Spleen (tissue), 13 donors: ENCODE measurements at regions of chr3 and their contacts with region 1.

Region 1: GRCh38 chr3:126394575-126395228 is at the start of gene CFAP100:
- DNase-seq: peak; percentile 70
- H3K4me3 ChIP-seq: peak within 1 kb of the TSS in 1 of 8 donors; percentile 13
- H3K27ac ChIP-seq: no peak within 1 kb of the TSS
- H3K4me1 ChIP-seq: peaks cover 0 to 6% (median 0%) of the 10 kb centered on the region in 6 donors
- H3K27me3 ChIP-seq: peaks cover 0 to 66% (median 13%) of the 10 kb centered on the region in 7 donors
- CTCF ChIP-seq: no peak
- POLR2A ChIP-seq: no peak
- total RNA-seq, gene CFAP100: not detected

Region 2: DNA sequence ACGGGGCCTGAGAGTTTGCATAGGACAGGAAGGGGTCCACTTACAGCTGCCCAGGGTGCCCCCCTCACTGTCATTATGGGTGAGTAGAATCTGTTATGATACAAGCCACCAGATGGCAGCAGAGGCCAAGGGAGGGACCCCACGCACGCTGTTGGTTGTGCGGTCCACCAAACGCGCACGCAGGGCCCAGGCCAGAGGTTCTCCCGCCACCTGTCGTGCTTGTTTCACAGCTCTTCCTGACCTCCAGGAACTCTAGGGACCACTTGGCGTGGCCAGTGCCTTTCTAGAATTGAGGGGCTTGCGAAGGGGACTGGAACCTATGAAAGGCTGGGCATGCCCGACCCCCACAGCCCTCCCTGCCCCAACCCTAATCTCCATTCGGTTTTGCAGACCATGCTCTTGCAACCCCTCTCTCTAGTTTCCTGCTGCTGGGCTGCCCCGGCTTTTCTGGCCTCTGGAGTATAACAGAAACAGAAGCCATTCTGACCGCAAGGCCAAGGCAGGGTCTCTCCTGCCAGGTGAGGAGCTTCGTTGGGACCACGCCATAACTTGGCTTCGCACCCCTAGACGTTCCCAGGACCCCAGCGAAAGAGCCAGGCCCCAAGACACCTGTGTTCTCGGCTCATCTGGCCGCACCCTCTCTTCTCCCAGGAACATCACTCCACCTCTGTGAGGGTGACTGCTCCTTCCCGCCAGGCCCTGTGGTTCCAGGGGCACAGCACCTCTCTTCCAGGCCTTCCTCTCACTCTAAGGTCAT is 260.3 kb before region 1 on chr3:
- intact Hi-C with region 1: loop called (anchors 2 kb)
- DNase-seq: peak; percentile 80
- H3K4me3 ChIP-seq: no peak overlapping the region
- H3K27ac ChIP-seq: no peak overlapping the region
- H3K4me1 ChIP-seq: peaks cover 0 to 15% (median 5%) of the 10 kb centered on the region in 6 donors
- H3K27me3 ChIP-seq: peaks cover 0 to 66% (median 4%) of the 10 kb centered on the region in 7 donors
- CTCF ChIP-seq: peak; percentile 23 to 74 (median 61)
- POLR2A ChIP-seq: no peak

Region 3: GRCh38 chr3:126259411-126260391 is 135.0 kb before region 1 on chr3:
- intact Hi-C with region 1: loop called (anchors 5 kb)
- DNase-seq: no peak
- H3K4me3 ChIP-seq: no peak overlapping the region
- H3K27ac ChIP-seq: no peak overlapping the region
- H3K4me1 ChIP-seq: peaks cover 0 to 5% (median 0%) of the 10 kb centered on the region in 6 donors
- H3K27me3 ChIP-seq: peaks cover 0 to 33% (median 0%) of the 10 kb centered on the region in 7 donors
- CTCF ChIP-seq: peak in 10 of 11 experiments; percentile 28 to 69 (median 56)
- POLR2A ChIP-seq: no peak

Region 4: DNA sequence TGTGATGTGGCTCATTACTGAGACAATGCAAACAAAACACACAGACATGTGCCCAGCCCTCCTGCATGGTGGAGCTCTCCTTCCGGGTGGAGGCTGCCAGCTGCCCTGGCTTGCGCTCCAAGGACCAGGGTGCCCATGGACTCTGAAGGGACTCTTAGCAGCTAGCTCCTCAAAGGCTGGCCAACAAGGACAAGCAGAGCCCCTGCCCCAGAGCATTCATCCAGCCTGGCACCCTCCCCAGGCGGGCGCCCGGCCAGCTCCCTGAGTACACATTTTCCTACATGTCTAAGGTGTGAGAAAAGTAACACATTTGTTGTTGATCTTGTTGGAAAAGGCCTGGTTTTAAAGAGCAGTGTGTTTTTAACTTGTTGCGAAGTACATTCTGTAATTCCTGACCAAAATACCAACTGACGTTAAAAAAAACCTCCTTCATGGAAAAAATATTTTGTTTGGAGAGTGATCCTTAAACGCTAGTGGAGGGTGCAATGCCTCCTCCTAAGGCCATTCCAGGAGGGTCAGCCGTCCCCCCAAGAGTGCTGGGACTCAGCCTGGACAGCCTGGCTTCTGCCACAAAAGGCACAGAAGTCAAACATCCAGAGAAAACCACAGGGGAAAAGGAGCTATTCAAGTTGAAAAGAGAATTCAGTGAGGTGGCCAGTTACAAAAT is 124.4 kb before region 1 on chr3:
- intact Hi-C with region 1: no loop called
- DNase-seq: no peak
- H3K4me3 ChIP-seq: no peak overlapping the region
- H3K27ac ChIP-seq: peak overlapping the region in 2 of 8 donors; percentile 35 to 38
- H3K4me1 ChIP-seq: peaks cover 0 to 17% (median 10%) of the 10 kb centered on the region in 6 donors
- H3K27me3 ChIP-seq: peaks cover 0 to 74% (median 11%) of the 10 kb centered on the region in 7 donors
- CTCF ChIP-seq: no peak
- POLR2A ChIP-seq: no peak